Activated CD4-positive, alpha-beta T cell treated with anti-CD3 and anti-CD28 coated beads, Interleukin-2, amount 10 ng/mL, durations not matched to agents 7 days and 5 days (primary cell): ENCODE measurements at regions of chr1 and their contacts with region 1.

Region 1: GRCh38 chr1:108949044-108949443 is 14.2 kb downstream of the CLCC1 start:
- DNase-seq: no peak
- H3K4me3 Mint-ChIP-seq: no peak overlapping the region
- H3K27ac Mint-ChIP-seq: no peak overlapping the region
- H3K4me1 Mint-ChIP-seq: peaks cover 11% of the 10 kb centered on the region
- H3K27me3 Mint-ChIP-seq: no peaks in the 10 kb centered on the region

Region 2: DNA sequence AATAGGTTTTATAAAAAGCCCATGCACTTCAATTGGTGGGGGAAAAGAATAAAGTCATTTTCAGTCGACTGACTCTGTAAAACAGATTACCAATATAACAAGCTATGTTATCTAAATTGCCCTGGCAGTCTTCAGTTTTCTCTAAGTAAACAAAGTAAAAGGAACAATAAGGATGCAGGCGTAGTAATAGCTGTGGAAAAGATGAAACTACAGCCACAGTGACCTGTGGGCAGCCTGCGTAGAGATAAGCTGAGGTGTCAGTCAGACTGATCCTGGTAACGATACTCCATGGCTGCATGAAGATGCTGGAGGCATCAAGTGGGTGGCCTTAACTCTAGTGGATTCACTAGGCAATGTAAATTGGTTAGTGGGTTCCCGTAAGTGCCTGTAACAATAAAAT is 15.1 kb before region 1 on chr1:
- CTCF ChIA-PET with region 1: interaction called, 3 read pairs
- POLR2A ChIA-PET with region 1: interaction called, 10 read pairs
- DNase-seq: no peak
- H3K4me3 Mint-ChIP-seq: no peak overlapping the region
- H3K27ac Mint-ChIP-seq: no peak overlapping the region
- H3K4me1 Mint-ChIP-seq: no peaks in the 10 kb centered on the region
- H3K27me3 Mint-ChIP-seq: no peaks in the 10 kb centered on the region

Region 3: DNA sequence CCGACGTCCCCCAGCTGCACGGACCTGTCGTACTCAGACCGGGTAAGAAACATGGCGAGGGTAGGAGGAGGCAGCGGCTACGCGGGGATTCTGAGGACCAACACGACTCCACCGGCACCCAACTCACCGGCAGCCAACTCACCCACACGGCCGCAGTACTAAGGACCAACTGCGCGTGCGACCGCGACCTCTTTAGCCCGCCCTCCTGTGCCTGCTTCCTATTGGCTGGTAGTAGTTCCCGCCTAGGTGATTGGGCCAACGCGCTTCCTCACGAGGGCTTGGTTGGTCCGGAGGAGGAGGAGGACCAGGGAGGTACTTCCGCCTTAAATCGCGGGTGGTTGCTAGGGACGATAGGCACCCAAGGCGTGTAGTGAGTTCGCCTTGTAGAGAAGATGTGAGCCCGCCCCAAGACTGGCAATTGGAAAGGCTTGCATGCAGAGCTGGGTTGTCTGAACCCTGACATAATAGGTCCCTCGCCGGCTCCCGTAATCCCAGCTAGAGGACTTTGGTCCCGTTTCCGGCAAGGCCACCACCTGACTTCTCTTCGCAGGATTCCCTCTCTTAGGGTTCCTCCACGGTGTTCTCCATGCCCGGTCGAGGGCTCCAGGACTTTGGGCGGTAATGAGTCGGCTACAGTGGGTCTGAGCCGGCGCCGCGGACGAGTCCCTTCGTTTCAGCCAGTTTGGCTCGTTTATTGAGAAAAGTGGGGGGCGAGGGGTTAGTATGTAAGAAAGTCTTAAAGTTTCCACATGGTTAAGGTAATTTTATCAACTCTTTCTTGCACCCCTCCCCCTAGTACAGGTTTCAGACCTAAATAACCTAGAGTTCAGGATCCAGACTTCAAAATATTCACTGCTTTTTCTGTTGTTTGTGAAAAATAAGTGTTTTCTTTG is 477.5 kb after region 1 on chr1 and contains the start of gene PSMA5:
- CTCF ChIA-PET with region 1: no interaction called
- POLR2A ChIA-PET with region 1: interaction called, 10 read pairs
- DNase-seq: peak; percentile 98
- H3K4me3 Mint-ChIP-seq: peak within 1 kb of the TSS; percentile 94
- H3K27ac Mint-ChIP-seq: peak within 1 kb of the TSS; percentile 97
- H3K4me1 Mint-ChIP-seq: peaks cover 39% of the 10 kb centered on the region
- H3K27me3 Mint-ChIP-seq: no peaks in the 10 kb centered on the region
- total RNA-seq, gene PSMA5: 157 to 174 TPM